Tibial artery (tissue), 4 donors: ENCODE measurements at regions of chr17 and their contacts with region 1.

Region 1: DNA sequence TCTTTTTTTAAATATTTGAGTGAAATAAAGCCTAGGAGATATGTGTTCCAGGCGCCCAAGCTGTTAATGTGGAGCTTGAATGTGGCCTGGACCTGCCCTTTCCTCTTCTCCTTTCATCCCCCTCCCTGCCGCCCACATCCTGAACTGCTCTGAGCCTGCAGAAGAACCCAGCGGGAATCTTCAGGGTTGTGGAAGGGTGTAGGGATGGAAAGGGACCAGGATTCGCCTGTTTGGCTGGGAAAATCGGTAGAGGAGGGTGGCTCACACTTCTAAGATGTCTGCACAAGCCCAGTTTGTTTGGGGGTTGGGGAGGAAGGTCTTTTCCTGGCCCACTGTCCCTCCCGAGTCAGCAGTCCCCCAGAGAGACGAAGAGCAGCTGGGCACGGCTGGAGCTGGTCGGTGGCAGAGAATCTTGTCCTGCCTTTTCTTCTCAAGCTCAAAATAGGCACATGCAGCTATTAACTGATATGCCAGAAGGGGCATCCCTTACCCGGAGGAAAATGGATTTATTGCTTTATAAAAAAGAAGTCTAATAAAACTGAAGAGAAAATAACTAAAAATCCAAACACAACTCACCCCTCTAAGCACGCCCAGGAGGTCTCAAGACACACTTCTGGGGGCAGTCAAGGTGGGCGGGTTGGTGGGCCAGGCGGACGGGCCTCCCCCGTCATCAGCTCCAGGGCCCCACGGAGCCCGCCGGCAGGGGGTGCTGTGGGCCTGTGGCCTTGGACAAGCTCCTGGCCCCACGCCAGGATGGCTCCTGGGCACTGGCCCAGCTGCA is 11.5 kb upstream of the PITPNA start:
- DNase-seq: peak; percentile 84 to 91
- H3K4me3 ChIP-seq: no peak overlapping the region
- H3K27ac ChIP-seq: peak overlapping the region; percentile 34 to 65
- H3K4me1 ChIP-seq: peaks cover 0 to 41% (median 28%) of the 10 kb centered on the region in 4 donors
- H3K27me3 ChIP-seq: peaks cover 0 to 16% of the 10 kb centered on the region in 2 donors
- CTCF ChIP-seq: peak; percentile 97 to 99

Region 2: GRCh38 chr17:1628856-1629646 is 54.9 kb after region 1 on chr17:
- intact Hi-C with region 1: loop called (anchors 2 kb)
- DNase-seq: peak; percentile 96 to 97
- H3K4me3 ChIP-seq: peak overlapping the region; percentile 64 to 79
- H3K27ac ChIP-seq: peak overlapping the region; percentile 85 to 87
- H3K4me1 ChIP-seq: peaks cover 0 to 31% (median 24%) of the 10 kb centered on the region in 4 donors
- H3K27me3 ChIP-seq: no peaks in the 10 kb centered on the region
- CTCF ChIP-seq: peak; percentile 36 to 49

Region 3: GRCh38 chr17:1865252-1866037 is 291.3 kb after region 1 on chr17:
- intact Hi-C with region 1: loop called (anchors 10 kb)
- DNase-seq: no peak
- H3K4me3 ChIP-seq: no peak overlapping the region
- H3K27ac ChIP-seq: no peak overlapping the region
- H3K4me1 ChIP-seq: no peaks in the 10 kb centered on the region
- H3K27me3 ChIP-seq: no peaks in the 10 kb centered on the region
- CTCF ChIP-seq: peak; percentile 41 to 63